ENCODE measurements at regions of chr3 and their contacts with region 1.

Region 1: DNA sequence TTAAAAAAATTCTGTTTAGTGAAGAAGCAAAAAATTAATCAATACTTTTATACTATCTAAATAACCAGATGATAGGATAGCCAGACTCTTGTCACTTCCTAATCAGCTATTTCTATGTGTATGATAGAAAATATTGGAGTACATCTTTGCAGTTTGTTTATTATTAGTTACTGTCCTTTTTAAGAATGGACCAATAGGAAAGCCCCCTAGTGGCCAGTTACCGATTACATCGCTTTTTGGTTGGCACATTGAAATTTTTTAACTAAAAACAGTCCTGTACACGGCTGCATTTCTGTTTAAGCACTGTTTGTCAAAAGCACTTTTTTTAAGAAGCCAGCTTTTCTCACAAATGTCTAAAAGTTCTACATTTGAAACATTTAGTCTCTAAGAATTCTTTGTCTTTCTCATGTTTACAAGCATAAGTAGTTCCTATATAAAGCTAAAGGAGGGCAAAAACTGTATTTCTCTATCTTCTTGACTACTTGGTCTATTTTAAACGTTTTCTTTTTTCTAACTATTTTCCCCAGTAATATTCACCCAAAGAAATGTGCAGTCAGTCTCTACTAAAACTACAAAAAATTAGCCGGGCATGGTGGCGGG is 253.2 kb upstream of the LRTM1 start:
- DNase-seq: no peak
- ATAC-seq: no peak
- H3K4me3 ChIP-seq: no peak overlapping the region
- H3K27ac ChIP-seq: no peak overlapping the region
- H3K4me1 ChIP-seq: no peaks in the 10 kb centered on the region
- H3K27me3 ChIP-seq: peaks cover 5% of the 10 kb centered on the region
- CTCF ChIP-seq: peak; percentile 72

Region 2: DNA sequence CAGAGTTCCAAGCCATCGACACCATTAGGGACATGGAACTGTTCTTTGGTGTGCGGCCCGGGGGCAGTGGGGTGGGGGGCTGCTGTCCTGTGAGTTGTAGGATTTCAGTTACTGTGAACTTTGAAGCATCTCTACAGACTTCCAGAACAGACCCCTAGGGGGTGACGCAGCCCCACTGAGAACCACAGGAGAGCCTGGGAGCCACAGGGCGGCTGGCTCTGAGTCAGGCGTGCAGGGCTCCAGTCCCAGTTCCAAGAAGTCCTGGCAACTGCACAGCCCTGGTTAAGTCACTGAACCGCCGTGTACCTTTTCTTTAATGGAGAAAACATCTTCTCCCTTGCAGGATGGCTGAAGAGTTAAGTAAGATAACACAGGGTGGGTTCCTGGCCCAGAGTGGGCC is 229.6 kb before region 1 on chr3:
- intact Hi-C with region 1: loop called (anchors 10 kb)
- DNase-seq: peak; percentile 55
- ATAC-seq: peak; percentile 68 to 78
- H3K4me3 ChIP-seq: no peak overlapping the region
- H3K27ac ChIP-seq: no peak overlapping the region
- H3K4me1 ChIP-seq: no peaks in the 10 kb centered on the region
- H3K27me3 ChIP-seq: no peaks in the 10 kb centered on the region
- CTCF ChIP-seq: peak; percentile 45

Region 3: GRCh38 chr3:55244247-55244646 is 63.2 kb after region 1 on chr3:
- intact Hi-C with region 1: loop called (anchors 2 kb)
- DNase-seq: no peak
- ATAC-seq: peak in 1 of 2 donors; percentile 58
- H3K4me3 ChIP-seq: no peak overlapping the region
- H3K27ac ChIP-seq: no peak overlapping the region
- H3K4me1 ChIP-seq: no peaks in the 10 kb centered on the region
- H3K27me3 ChIP-seq: no peaks in the 10 kb centered on the region
- CTCF ChIP-seq: no peak

Measured in lower lobe of right lung (tissue), 2 donors.